Sigmoid colon (tissue), 7 donors: ENCODE measurements at regions of chr4 and their contacts with region 1.

Region 1: DNA sequence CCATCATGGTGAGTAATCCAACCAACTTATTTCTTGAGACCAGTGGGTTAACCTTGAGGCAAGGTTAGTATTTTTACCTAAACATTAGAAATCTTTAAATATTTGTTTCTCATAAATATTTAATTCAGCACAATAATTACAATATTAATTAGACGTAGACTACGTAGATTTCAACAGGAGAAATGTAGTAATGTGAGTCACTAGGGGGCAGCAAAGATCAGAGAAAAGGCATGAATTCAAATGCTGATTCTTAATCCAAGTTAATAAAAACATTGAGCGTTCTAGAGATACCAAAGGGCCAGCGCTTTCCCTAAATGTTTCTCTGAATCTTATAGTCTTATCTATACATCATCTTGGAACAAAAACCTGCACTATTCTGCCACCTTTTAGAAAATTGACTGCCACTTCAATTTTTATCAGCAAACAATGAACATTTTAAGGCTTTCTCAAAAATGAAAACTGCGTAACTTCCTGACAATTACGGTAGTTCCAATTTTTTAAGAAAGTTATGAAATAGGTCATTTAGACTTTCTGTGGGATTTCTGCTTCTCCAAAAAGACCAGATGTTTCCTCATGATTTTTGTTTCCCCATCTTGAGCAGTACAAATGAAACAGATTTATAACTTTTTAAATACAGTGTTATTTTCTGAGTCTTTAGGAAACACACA is 180.7 kb downstream of the GASK1B start:
- DNase-seq: no peak
- H3K4me3 ChIP-seq: peak overlapping the region; percentile 12 to 40 (median 24)
- H3K27ac ChIP-seq: peak overlapping the region; percentile 18 to 68 (median 62)
- H3K4me1 ChIP-seq: peaks cover 0 to 18% (median 12%) of the 10 kb centered on the region in 4 donors
- H3K27me3 ChIP-seq: no peaks in the 10 kb centered on the region
- CTCF ChIP-seq: peak; percentile 65 to 70 (median 66)
- EP300 ChIP-seq: peak in 2 of 4 donors; percentile 17 to 52
- POLR2A ChIP-seq: no peak

Region 2: DNA sequence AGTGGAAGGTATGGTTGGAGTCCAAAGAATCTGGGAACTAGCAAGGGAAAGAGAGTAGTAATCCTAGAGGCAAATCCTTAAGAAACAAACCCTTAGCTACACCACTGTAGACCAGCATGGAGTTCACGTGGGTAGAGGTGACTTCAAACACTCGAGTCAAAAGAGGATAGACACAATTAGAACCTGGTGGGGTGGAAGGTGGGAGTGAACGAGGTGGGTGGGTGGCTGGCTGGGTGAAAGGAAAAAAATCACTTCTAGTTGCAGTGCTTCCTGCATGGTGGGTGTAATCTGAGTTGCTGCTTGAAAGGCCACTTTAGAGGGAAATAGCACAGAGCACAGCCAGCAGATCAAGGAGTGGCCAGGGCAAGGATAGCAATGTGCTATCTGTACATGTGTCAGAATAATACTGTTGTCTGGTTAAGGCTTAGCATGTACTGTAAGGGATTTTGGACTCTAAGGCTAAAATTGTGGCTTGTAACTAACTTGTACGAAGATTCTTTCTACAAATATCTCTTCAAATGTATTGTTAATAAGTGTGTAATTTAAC is 415.4 kb before region 1 on chr4:
- intact Hi-C with region 1: no loop called
- DNase-seq: no peak
- H3K4me3 ChIP-seq: no peak overlapping the region
- H3K27ac ChIP-seq: no peak overlapping the region
- H3K4me1 ChIP-seq: no peaks in the 10 kb centered on the region
- H3K27me3 ChIP-seq: no peaks in the 10 kb centered on the region
- CTCF ChIP-seq: no peak
- EP300 ChIP-seq: no peak
- POLR2A ChIP-seq: no peak

Region 3: GRCh38 chr4:157616741-157617472 is 375.3 kb before region 1 on chr4:
- intact Hi-C with region 1: no loop called
- DNase-seq: no peak
- H3K4me3 ChIP-seq: no peak overlapping the region
- H3K27ac ChIP-seq: no peak overlapping the region
- H3K4me1 ChIP-seq: no peaks in the 10 kb centered on the region
- H3K27me3 ChIP-seq: no peaks in the 10 kb centered on the region
- CTCF ChIP-seq: no peak
- EP300 ChIP-seq: no peak
- POLR2A ChIP-seq: no peak

Region 4: GRCh38 chr4:158172261-158173258 is 180.4 kb after region 1 on chr4 and contains the start of gene GASK1B:
- intact Hi-C with region 1: loop called (anchors 1 kb)
- DNase-seq: no peak
- H3K4me3 ChIP-seq: peak within 1 kb of the TSS; percentile 31 to 61 (median 53)
- H3K27ac ChIP-seq: peak within 1 kb of the TSS; percentile 71 to 92 (median 80)
- H3K4me1 ChIP-seq: peaks cover 0 to 70% (median 56%) of the 10 kb centered on the region in 4 donors
- H3K27me3 ChIP-seq: no peaks in the 10 kb centered on the region
- CTCF ChIP-seq: peak; percentile 37 to 55 (median 52)
- EP300 ChIP-seq: no peak
- POLR2A ChIP-seq: no peak
- total RNA-seq, gene GASK1B: 34.4 to 59.5 (median 47.2) TPM

Region 5: GRCh38 chr4:158624889-158625478 is 632.8 kb after region 1 on chr4:
- intact Hi-C with region 1: loop called (anchors 5 kb)
- DNase-seq: no peak
- H3K4me3 ChIP-seq: no peak overlapping the region
- H3K27ac ChIP-seq: no peak overlapping the region
- H3K4me1 ChIP-seq: peaks cover 0 to 14% (median 4%) of the 10 kb centered on the region in 4 donors
- H3K27me3 ChIP-seq: no peaks in the 10 kb centered on the region
- CTCF ChIP-seq: peak; percentile 41 to 68 (median 52)
- EP300 ChIP-seq: no peak
- POLR2A ChIP-seq: no peak